Heart left ventricle (tissue), 16 donors: ENCODE measurements at regions of chr19 and their contacts with region 1.

Region 1: GRCh38 chr19:45607071-45608029 is 5.3 kb upstream of the GPR4 start:
- DNase-seq: peak; percentile 77 to 85 (median 80)
- ATAC-seq: peak; percentile 78 to 90 (median 86)
- H3K4me3 ChIP-seq: peak overlapping the region in 9 of 12 donors; percentile 29 to 50 (median 41)
- H3K27ac ChIP-seq: peak overlapping the region in 11 of 12 donors; percentile 34 to 76 (median 64)
- H3K4me1 ChIP-seq: peaks cover 0 to 14% (median 9%) of the 10 kb centered on the region in 12 donors
- H3K27me3 ChIP-seq: peaks cover 0 to 12% (median 5%) of the 10 kb centered on the region in 9 donors
- CTCF ChIP-seq: peak; percentile 77 to 95 (median 88)
- POLR2A ChIP-seq: no peak

Region 2: DNA sequence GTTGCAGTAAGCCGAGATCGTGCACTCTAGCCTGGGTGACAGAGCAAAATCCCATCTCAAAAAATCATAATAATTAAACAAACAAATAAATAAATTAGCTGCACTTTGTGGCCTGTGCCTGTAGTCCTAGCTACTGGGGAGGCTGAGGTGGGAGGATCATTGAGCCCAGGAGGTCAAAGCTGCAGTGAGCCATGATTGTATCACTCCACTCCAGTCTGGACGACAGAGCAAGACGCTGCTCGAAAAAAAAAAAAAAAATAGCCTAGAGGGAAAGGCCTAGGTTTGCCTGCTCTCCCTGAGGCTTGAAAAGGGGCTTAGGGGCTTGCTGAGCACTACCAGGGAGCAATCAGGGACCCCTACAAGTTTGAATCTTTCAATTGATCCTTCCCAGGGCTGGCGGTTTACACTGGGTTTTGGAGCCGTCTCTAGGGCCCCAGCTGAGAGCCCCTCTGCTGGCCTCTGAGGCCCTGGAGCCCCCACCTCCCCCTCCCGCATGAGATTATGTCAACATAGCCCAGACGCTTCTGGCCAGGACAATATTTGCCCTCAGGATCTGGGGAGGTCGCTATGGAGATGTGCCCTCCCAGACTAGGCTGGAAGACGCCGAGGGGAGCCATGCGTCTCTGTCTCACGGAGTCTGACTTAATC is 50.3 kb after region 1 on chr19:
- intact Hi-C with region 1: no loop called
- DNase-seq: no peak
- ATAC-seq: no peak
- H3K4me3 ChIP-seq: no peak overlapping the region
- H3K27ac ChIP-seq: no peak overlapping the region
- H3K4me1 ChIP-seq: no peaks in the 10 kb centered on the region
- H3K27me3 ChIP-seq: peaks cover 0 to 11% (median 0%) of the 10 kb centered on the region in 9 donors
- CTCF ChIP-seq: no peak
- POLR2A ChIP-seq: no peak

Region 3: DNA sequence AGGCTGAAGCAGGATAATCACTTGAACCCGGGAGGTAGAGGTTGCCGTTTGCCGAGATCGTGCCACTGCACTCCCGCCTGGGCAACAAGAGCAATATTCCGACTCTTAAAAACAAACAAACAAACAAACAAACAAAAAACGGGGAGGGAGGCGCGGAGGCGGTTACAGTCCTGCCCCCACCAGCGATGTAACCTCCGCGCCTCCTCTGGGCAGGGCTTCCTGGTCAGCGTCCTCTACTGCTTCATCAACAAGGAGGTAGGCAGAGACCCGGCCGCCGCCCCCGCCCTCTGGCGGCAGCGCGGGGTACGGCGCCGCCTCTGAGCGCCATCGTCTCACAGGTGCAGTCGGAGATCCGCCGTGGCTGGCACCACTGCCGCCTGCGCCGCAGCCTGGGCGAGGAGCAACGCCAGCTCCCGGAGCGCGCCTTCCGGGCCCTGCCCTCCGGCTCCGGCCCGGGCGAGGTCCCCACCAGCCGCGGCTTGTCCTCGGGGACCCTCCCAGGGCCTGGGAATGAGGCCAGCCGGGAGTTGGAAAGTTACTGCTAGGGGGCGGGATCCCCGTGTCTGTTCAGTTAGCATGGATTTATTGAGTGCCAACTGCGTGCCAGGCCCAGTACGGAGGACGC is 74.2 kb after region 1 on chr19:
- intact Hi-C with region 1: loop called in 1 of 10 experiments (anchors 2 kb)
- DNase-seq: peak; percentile 78 to 91 (median 86)
- ATAC-seq: peak; percentile 86 to 91 (median 88)
- H3K4me3 ChIP-seq: peak overlapping the region; percentile 3 to 55 (median 47)
- H3K27ac ChIP-seq: peak overlapping the region in 11 of 12 donors; percentile 29 to 82 (median 61)
- H3K4me1 ChIP-seq: peaks cover 0 to 33% (median 15%) of the 10 kb centered on the region in 12 donors
- H3K27me3 ChIP-seq: peaks cover 10 to 33% (median 27%) of the 10 kb centered on the region in 9 donors
- CTCF ChIP-seq: peak; percentile 91 to 99 (median 98)
- POLR2A ChIP-seq: peak in 1 of 2 donors; percentile 42

Region 4: DNA sequence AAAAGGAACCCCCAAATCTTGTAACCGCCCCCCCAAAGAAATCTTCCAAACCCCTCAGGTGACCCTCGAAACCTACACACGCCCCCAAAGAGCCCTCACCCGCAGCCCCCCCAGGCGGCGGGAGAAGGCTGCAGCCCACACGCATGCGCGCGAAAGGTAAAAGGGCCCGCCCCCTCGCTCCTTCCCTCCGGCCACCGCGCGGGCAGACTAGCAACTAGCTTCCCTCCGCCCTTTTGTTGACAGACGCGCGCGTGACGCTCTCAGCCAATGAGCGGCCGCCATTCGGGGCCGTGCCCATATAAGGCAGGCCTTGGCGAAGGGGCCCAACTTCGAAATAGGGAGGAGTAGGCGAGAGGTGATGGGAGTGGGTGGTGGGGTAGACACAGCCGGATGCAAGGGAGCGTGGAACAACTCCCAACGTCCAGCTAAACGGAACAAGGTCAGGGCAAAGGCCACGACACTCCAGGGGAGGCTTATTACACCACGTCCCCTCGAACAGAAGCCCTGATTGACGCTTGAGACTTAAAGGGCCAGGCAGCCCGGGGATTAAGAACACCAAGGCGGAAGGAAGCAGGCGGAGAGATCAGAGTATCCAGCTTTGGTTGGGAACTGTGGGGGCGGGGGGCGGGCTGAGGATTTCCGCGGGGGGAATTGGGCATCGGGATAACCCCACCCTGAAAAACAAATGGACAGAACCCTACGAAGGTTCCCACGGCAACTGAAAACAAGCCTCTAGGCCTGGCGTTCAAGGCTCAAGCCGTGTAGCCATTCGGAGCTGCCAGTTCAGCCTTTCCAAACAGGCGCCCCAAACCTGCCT is 110.0 kb after region 1 on chr19:
- intact Hi-C with region 1: no loop called
- DNase-seq: peak; percentile 99 to 100 (median 99)
- ATAC-seq: peak; percentile 97 to 98 (median 98)
- H3K4me3 ChIP-seq: peak overlapping the region; percentile 47 to 77 (median 68)
- H3K27ac ChIP-seq: peak overlapping the region; percentile 78 to 96 (median 94)
- H3K4me1 ChIP-seq: peaks cover 0 to 38% (median 16%) of the 10 kb centered on the region in 12 donors
- H3K27me3 ChIP-seq: no peaks in the 10 kb centered on the region
- CTCF ChIP-seq: peak in 7 of 12 donors; percentile 8 to 38 (median 19)
- POLR2A ChIP-seq: peak in 1 of 2 donors; percentile 43

Region 5: GRCh38 chr19:45834970-45835369 is 227.6 kb after region 1 on chr19:
- intact Hi-C with region 1: no loop called
- DNase-seq: peak in 1 of 5 donors; percentile 20
- ATAC-seq: no peak
- H3K4me3 ChIP-seq: no peak overlapping the region
- H3K27ac ChIP-seq: no peak overlapping the region
- H3K4me1 ChIP-seq: no peaks in the 10 kb centered on the region
- H3K27me3 ChIP-seq: no peaks in the 10 kb centered on the region
- CTCF ChIP-seq: no peak
- POLR2A ChIP-seq: no peak